ENCODE measurements at regions of chr1 and their contacts with region 1.

Region 1: GRCh38 chr1:20640183-20640597 is 6.9 kb downstream of the PINK1 start:
- DNase-seq: peak; percentile 45 to 54
- ATAC-seq: peak; percentile 83 to 85; a peak in 5 of 6 replicates
- H3K4me3 ChIP-seq: no peak overlapping the region
- H3K27ac ChIP-seq: no peak overlapping the region
- H3K4me1 ChIP-seq: peaks cover 3% of the 10 kb centered on the region; the same call in 1 of the 3 replicates
- CTCF ChIP-seq: peak; percentile 83
- EP300 ChIP-seq: no peak
- POLR2A ChIP-seq: no peak
- RAD21 ChIP-seq: peak; percentile 86 to 88

Region 2: DNA sequence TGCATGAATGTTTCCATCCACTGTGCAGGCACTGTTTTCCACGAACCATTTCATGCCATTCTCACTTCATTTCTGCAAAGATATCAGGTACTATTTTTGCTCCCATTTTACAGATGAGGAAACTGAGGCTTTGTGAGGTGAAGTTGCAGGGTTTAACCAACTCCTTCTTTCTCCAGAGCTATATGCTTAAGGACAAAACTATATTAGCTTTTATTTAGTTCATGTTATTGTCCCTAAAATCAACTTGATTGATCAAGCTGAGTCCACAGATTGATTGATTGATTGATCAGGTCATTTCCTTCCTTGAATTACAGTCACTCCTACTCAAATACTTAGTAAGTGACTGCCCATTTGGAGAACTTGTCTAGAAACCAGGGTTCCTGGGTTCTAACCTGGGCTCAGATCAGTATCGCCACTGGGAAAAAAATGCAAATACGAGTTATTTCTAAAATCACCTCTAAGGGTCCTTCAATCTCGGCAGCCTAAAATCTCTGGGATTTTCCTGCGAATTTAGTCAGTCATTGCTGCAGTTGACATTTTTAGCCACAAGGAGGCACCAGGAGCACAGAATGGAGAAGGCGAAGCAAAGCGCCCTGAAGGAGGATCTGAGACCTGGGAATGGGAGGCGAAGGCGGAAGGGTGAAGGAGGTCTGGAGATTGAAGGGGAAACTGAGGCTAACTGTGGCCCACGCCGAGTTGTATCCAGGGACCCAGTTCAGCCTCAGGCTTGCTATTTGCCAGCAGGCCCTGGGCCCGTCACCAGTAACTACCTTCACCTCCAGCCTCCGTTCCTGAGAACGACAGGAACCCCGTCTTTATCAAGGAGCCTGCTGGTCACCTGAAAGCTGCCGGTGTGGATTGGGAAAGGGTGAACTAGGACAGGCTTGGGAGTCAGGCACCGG is 118.0 kb before region 1 on chr1:
- CTCF ChIA-PET with region 1: interaction called, 101 read pairs
- POLR2A ChIA-PET with region 1: no interaction called
- DNase-seq: peak; percentile 36 to 72
- ATAC-seq: peak; percentile 87 to 91
- H3K4me3 ChIP-seq: no peak overlapping the region
- H3K27ac ChIP-seq: peak overlapping the region; percentile 39 to 67; a peak in 3 of 6 replicates
- H3K4me1 ChIP-seq: no peaks in the 10 kb centered on the region
- CTCF ChIP-seq: peak; percentile 86
- EP300 ChIP-seq: no peak
- POLR2A ChIP-seq: no peak
- RAD21 ChIP-seq: peak; percentile 91 to 95